Posterior vena cava (tissue), 2 donors: ENCODE measurements at regions of chr9 and their contacts with region 1.

Region 1: DNA sequence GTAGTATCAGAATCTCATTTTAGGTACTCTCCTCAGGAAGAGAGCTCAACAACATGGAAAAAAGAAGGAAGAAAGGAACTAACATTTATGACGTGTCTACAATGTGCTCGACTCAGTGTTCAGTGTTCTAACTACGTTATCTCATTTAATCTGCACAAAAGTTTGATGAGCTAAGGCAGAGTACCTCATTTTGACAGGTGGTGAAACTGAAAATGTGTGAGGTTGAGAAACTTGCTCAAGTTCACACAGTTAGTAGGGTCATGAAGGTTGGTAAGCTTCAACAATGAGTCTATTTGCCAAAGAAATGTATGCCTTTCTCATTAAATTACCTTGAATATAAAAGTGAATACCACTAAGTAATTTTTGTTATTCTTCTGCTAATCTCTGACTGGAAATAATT is 165.1 kb downstream of the CAAP1 start:
- DNase-seq: no peak

Region 2: DNA sequence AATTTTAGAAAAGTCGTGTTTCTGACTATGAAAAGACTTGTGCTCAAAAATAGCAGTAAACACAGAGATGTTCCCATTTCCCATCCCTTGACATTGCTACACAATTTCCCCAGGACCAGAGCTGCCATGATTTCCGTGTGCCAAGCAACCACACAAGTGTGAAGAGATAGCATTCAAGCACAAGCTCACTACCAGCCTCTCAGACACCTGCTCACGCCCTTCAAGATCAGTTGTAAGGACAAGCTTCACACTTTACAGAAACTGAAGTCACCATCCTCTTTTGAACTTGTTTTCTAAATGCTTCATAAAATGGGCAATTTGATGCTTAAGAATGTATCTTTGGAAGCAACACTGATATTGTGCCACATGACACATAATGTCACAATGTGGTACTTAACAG is 168.0 kb before region 1 on chr9:
- intact Hi-C with region 1: loop called in 1 of 2 experiments (anchors 5 kb)
- DNase-seq: no peak